ENCODE measurements at regions of chr4 and their contacts with region 1.

Region 1: DNA sequence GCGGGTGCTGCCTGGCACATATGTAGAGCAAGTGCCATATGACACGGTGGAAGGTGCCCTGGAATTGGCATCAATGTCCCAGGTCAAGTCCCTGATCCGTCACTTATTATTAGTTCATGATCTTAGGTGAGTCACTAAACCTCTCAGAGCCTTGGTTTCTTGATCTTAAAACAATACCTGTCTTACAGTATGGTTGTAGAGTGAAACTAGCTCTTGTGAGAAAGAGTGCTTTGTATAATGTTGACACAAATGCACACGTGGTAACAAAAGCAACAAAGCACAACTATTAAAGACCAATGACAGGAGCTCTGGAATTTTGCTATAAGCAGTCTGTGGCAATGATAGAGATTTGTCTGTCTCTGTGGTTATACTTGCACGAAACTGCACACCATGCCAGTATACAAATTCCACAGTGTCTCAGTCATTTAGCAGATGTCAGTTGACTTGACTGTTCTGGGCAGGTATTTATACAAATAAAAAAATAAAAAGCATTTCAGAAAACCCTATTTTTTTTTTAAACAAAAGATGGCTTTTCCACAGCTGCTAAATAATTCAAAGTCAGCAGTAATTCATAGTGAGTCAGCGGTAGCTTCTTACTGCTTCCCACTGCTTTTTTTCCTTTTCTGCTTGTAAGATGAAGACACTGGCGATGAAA is 19.7 kb upstream of the ACSL1 start:
- DNase-seq: no peak
- H3K4me3 Mint-ChIP-seq: no peak overlapping the region
- H3K27ac Mint-ChIP-seq: no peak overlapping the region
- H3K4me1 Mint-ChIP-seq: peaks cover 9% of the 10 kb centered on the region
- H3K27me3 Mint-ChIP-seq: peaks cover 5% of the 10 kb centered on the region

Region 2: GRCh38 chr4:184722798-184723197 is 122.7 kb before region 1 on chr4:
- intact Hi-C with region 1: no loop called
- DNase-seq: no peak
- H3K4me3 Mint-ChIP-seq: no peak overlapping the region
- H3K27ac Mint-ChIP-seq: no peak overlapping the region
- H3K4me1 Mint-ChIP-seq: peaks cover 64% of the 10 kb centered on the region
- H3K27me3 Mint-ChIP-seq: no peaks in the 10 kb centered on the region

Region 3: GRCh38 chr4:184792950-184793555 is 52.4 kb before region 1 on chr4:
- intact Hi-C with region 1: loop called (anchors 2 kb)
- DNase-seq: no peak
- H3K4me3 Mint-ChIP-seq: peak overlapping the region; percentile 25
- H3K27ac Mint-ChIP-seq: peak overlapping the region; percentile 55
- H3K4me1 Mint-ChIP-seq: peaks cover 47% of the 10 kb centered on the region
- H3K27me3 Mint-ChIP-seq: no peaks in the 10 kb centered on the region

Region 4: DNA sequence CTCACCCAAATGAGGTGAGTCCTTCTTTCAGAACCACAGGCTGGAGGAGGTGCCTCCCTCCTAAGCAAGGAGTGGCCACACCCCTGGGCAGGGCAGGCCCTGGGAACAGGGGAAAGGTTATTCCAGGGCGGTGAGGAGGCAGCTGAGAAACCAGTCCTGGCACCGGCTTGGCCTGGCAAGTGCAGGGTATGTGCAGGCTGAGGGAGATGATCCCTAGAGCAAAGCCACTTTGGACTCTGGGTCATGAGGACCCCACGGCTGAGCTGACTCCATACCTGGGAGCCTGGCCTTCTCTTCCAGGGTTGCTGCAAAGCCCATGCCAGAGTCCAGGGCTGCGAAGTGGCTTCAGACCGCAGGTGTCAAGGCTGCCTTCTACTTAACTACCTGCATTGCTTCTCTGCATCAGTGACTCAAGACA is 123.3 kb after region 1 on chr4:
- intact Hi-C with region 1: loop called (anchors 2 kb)
- DNase-seq: no peak
- H3K4me3 Mint-ChIP-seq: no peak overlapping the region
- H3K27ac Mint-ChIP-seq: no peak overlapping the region
- H3K4me1 Mint-ChIP-seq: peaks cover 4% of the 10 kb centered on the region
- H3K27me3 Mint-ChIP-seq: peaks cover 2% of the 10 kb centered on the region

Region 5: GRCh38 chr4:185165605-185166063 is 320.1 kb after region 1 on chr4:
- intact Hi-C with region 1: loop called (anchors 2 kb)
- DNase-seq: no peak
- H3K4me3 Mint-ChIP-seq: no peak overlapping the region
- H3K27ac Mint-ChIP-seq: peak overlapping the region; percentile 80
- H3K4me1 Mint-ChIP-seq: peaks cover 20% of the 10 kb centered on the region
- H3K27me3 Mint-ChIP-seq: peaks cover 32% of the 10 kb centered on the region

Region 6: GRCh38 chr4:185343726-185344581 is 498.5 kb after region 1 on chr4:
- intact Hi-C with region 1: loop called (anchors 10 kb)
- DNase-seq: no peak
- H3K4me3 Mint-ChIP-seq: peak overlapping the region; percentile 51
- H3K27ac Mint-ChIP-seq: peak overlapping the region; percentile 89
- H3K4me1 Mint-ChIP-seq: peaks cover 68% of the 10 kb centered on the region
- H3K27me3 Mint-ChIP-seq: no peaks in the 10 kb centered on the region

Measured in activated T-helper 1 cell treated with anti-CD3 and anti-CD28 coated beads, Interleukin-12 subunit alpha, Interleukin-12 subunit beta, Interleukin-2, Interleukin-4 antibody, amounts not matched to agents 30 ng/mL and 10 ng/mL and 1 ng/mL, durations not matched to agents 14 hours and 24 hours and 36 hours (primary cell).